Naive thymus-derived CD8-positive, alpha-beta T cell (primary cell): ENCODE measurements at regions of chr22 and their contacts with region 1.

Region 1: GRCh38 chr22:41091132-41092022 is 1.0 kb upstream of the EP300 start:
- DNase-seq: peak; percentile 98 to 100 (median 99)
- ATAC-seq: peak; percentile 79 to 88
- H3K4me3 Mint-ChIP-seq: peak overlapping the region; percentile 92 to 99 (median 98)
- H3K27ac Mint-ChIP-seq: peak overlapping the region; percentile 97 to 99 (median 99)
- H3K4me1 Mint-ChIP-seq: peaks cover 17 to 34% (median 32%) of the 10 kb centered on the region in 4 donors
- H3K27me3 Mint-ChIP-seq: no peaks in the 10 kb centered on the region

Region 2: DNA sequence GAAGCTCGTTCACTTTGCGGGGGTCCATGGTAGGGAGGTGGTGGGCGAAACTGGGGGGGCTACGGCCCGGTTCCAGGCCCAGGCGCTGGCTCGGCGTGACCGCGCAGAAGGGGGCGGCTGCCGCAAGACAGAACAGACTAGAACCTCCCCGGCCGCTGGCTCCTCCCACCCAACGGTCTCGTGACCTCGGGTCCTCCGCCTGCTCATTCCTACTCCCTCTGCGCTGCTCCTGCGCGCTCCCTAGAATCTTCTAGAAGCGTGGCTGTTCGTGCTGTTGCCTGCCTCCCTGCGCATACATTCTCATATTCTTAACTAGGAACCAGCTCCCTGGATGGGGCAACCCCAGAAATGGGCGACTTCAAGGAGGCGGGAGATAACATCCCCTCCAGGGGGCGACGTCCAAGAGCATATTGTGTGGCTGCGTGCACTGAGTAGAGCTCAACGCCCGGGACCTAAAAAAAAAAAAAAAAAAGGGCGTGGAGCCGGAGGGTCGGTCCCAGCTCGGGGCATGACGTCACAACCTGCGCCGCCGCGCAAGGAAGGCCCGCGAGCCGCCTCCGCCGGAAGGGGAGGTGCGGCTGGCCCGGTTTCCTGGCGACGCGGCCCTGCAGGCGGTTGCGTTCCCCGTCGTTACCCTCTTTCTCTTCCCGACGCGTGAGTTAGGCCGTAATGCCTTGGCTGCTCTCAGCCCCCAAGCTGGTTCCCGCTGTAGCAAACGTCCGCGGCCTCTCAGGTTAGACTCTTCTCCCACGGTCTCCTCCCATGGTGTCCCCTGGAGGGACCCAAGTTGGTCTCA is 234.7 kb before region 1 on chr22 and contains the starts of genes ST13 and XPNPEP3:
- POLR2A ChIA-PET with region 1: interaction called, 12 read pairs
- DNase-seq: peak; percentile 95 to 99 (median 97)
- ATAC-seq: peak; percentile 88 to 89
- H3K4me3 Mint-ChIP-seq: peak within 1 kb of the TSS; percentile 97 to 100 (median 99)
- H3K27ac Mint-ChIP-seq: peak within 1 kb of the TSS; percentile 98 to 100 (median 100)
- H3K4me1 Mint-ChIP-seq: peaks cover 9 to 69% (median 63%) of the 10 kb centered on the region in 4 donors
- H3K27me3 Mint-ChIP-seq: no peaks in the 10 kb centered on the region
- polyA plus RNA-seq, gene ST13: 244 to 283 (median 260) TPM
- polyA plus RNA-seq, gene XPNPEP3: 5.9 to 11.5 (median 7.1) TPM

Region 3: GRCh38 chr22:40922484-40923303 is 168.7 kb before region 1 on chr22:
- POLR2A ChIA-PET with region 1: interaction called, 11 read pairs
- DNase-seq: peak in 7 of 10 donors; percentile 5 to 75 (median 44)
- ATAC-seq: peak; percentile 89 to 94
- H3K4me3 Mint-ChIP-seq: peak overlapping the region in 9 of 10 donors; percentile 2 to 56 (median 28)
- H3K27ac Mint-ChIP-seq: peak overlapping the region; percentile 15 to 91 (median 76)
- H3K4me1 Mint-ChIP-seq: peaks cover 3 to 8% (median 4%) of the 10 kb centered on the region in 4 donors
- H3K27me3 Mint-ChIP-seq: no peaks in the 10 kb centered on the region

Region 4: DNA sequence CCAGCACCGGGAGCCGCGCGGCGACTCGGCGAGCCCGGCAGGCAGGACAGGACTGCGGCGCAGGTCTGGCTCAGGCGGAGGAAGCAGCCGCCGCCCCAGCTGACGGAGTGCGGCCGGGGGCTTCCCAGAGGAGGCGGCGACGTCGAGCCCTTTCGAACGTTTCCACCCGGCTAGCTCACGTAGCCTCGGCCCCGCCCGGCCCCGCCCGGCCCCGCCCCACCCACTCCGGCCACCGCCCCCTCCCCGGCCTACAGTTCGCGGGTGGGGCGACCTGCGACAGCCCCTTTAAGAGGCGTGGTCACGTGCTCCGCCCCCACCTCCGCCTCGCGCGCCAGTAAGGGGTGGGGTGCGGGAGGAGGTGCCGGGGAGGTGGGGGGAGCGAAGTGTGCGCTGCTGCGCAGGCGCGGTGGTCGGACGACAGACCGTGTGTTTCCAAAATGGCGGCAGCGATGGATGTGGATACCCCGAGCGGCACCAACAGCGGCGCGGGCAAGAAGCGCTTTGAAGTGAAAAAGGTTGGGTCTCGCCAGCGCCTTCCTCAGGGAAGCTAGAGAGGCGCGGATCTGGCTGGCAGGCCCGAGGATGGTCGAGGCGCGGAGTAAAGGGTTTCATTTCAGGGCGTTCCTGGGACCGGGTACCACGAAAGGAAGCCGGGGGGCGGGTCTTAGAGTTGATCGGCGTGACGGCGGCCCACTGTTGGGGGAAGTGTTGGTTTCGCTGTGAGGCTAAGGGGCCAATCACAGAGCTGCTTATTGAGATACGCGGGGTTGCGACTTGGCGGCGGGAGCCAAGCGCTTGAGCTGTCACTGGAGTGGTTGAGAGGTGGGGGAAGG is 140.2 kb before region 1 on chr22 and contains the start of gene RBX1:
- POLR2A ChIA-PET with region 1: interaction called, 142 read pairs
- DNase-seq: peak; percentile 98 to 100 (median 99)
- ATAC-seq: peak; percentile 80 to 82
- H3K4me3 Mint-ChIP-seq: peak within 1 kb of the TSS; percentile 97 to 100 (median 99)
- H3K27ac Mint-ChIP-seq: peak within 1 kb of the TSS; percentile 98 to 100 (median 99)
- H3K4me1 Mint-ChIP-seq: peaks cover 12 to 39% (median 32%) of the 10 kb centered on the region in 4 donors
- H3K27me3 Mint-ChIP-seq: peaks cover 0 to 2% (median 0%) of the 10 kb centered on the region in 5 donors
- polyA plus RNA-seq, gene RBX1: 134 to 152 (median 148) TPM

Region 5: GRCh38 chr22:41022470-41023298 is 68.7 kb before region 1 on chr22:
- POLR2A ChIA-PET with region 1: interaction called, 54 read pairs
- DNase-seq: peak; percentile 64 to 86 (median 76)
- ATAC-seq: peak; percentile 80 to 86
- H3K4me3 Mint-ChIP-seq: peak overlapping the region; percentile 61 to 89 (median 84)
- H3K27ac Mint-ChIP-seq: peak overlapping the region in 9 of 10 donors; percentile 32 to 92 (median 83)
- H3K4me1 Mint-ChIP-seq: peaks cover 4 to 24% (median 19%) of the 10 kb centered on the region in 4 donors
- H3K27me3 Mint-ChIP-seq: no peaks in the 10 kb centered on the region

Region 6: DNA sequence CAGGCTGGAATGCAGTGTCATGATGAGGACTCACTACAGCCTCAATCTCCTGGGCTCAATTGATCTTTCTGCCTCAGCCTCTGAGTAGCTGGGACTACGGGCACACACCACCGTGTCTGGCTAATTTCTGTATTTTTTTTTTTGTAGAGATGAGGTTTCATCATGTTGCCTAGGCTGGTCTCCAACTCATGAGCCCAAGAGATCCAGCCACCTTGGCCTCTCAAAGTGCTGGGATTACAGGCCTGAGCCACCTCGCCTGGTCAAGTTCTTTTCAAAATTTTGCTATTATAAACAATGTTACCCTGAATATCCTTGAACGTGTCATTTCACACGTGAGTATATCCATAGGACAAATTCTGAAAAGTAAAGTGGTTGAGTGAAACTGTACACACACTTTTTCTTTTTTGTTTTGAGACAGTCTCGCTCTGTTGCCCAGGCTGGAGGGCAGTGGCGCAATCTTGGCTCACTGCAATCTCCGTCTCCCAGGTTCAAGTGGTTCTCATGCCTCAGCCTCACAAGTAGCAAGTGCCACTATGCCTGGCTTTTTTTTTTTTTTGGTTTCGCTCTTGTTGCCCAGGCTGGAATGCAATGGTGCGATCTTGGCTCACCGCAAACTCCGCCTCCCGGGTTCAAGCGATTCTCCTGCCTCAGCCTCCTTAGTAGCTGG is 20.6 kb before region 1 on chr22:
- POLR2A ChIA-PET with region 1: interaction called, 12 read pairs
- DNase-seq: no peak
- ATAC-seq: no peak
- H3K4me3 Mint-ChIP-seq: no peak overlapping the region
- H3K27ac Mint-ChIP-seq: no peak overlapping the region
- H3K4me1 Mint-ChIP-seq: peaks cover 5 to 24% (median 7%) of the 10 kb centered on the region in 4 donors
- H3K27me3 Mint-ChIP-seq: no peaks in the 10 kb centered on the region

Region 7: DNA sequence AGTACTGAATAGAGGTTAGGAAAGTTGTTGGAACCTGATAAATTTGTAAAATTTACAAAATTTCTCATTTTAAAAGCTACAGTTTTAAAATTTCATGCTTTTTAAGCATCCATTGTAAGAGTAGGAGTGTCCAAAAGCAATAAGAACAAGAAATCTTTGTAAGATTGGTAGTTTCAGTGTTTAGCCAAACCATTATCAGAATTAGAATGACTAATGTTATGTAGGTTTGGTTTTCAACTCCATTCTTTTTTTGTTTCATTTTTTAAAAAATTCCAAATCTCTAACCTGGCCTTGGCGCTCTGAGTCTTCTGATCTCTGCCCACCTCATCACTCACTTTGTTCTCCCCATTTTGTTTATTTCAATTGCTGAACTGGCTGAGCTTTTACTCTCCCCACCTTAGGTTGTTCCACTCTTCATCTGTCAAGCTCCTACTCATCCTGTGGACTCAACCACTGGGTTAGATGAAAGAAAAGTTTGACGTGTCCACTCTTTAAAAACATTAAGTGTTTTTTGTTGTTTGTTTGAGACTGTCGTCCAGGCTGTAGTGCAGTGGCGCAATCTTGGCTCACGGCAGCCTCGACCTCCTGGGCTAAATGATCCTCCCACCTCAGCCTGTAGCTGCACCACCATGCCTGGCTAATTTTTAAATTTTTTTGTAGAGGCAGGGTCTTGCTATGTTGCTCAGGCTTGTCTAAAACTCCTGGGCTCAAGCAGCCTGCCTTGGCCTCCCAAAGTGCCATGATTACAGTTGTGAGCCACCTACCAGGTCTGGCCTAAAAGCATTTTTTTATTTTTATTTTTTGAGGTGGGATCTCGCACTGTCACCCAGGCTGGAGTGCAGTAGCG is 15.0 kb after region 1 on chr22:
- POLR2A ChIA-PET with region 1: interaction called, 13 read pairs
- DNase-seq: no peak
- ATAC-seq: peak; percentile 49 to 52
- H3K4me3 Mint-ChIP-seq: peak overlapping the region in 9 of 10 donors; percentile 9 to 80 (median 24)
- H3K27ac Mint-ChIP-seq: peak overlapping the region; percentile 61 to 93 (median 70)
- H3K4me1 Mint-ChIP-seq: peaks cover 23 to 72% (median 63%) of the 10 kb centered on the region in 4 donors
- H3K27me3 Mint-ChIP-seq: no peaks in the 10 kb centered on the region